ENCODE measurements at regions of chr1 and their contacts with region 1.

Region 1: GRCh38 chr1:206912445-206913095 is 9.2 kb downstream of the FCMR start:
- DNase-seq: peak; percentile 77
- H3K4me3 ChIP-seq: no peak overlapping the region
- H3K27ac ChIP-seq: no peak overlapping the region
- H3K4me1 ChIP-seq: peaks cover 3 to 34% (median 11%) of the 10 kb centered on the region in 4 donors
- H3K27me3 ChIP-seq: peaks cover 10% of the 10 kb centered on the region
- CTCF ChIP-seq: peak; percentile 86 to 88 (median 87)
- EP300 ChIP-seq: no peak
- POLR2A ChIP-seq: no peak

Region 2: GRCh38 chr1:206635080-206635977 is 277.2 kb before region 1 on chr1 and contains the start of gene DYRK3:
- in situ Hi-C with region 1: loop called in 3 of 4 experiments (anchors 10 to 25 kb)
- intact Hi-C with region 1: loop called (anchors 10 kb)
- DNase-seq: peak; percentile 96
- H3K4me3 ChIP-seq: peak within 1 kb of the TSS; percentile 48 to 89 (median 72)
- H3K27ac ChIP-seq: peak within 1 kb of the TSS; percentile 77 to 85 (median 82)
- H3K4me1 ChIP-seq: peaks cover 6 to 36% (median 18%) of the 10 kb centered on the region in 4 donors
- H3K27me3 ChIP-seq: peaks cover 21% of the 10 kb centered on the region
- CTCF ChIP-seq: peak in 3 of 5 experiments; percentile 7 to 37 (median 11)
- EP300 ChIP-seq: no peak
- POLR2A ChIP-seq: peak; percentile 79
- total RNA-seq, gene DYRK3: 1.6 to 3.2 TPM in 2 of 4 donors, not detected in the others

Region 3: DNA sequence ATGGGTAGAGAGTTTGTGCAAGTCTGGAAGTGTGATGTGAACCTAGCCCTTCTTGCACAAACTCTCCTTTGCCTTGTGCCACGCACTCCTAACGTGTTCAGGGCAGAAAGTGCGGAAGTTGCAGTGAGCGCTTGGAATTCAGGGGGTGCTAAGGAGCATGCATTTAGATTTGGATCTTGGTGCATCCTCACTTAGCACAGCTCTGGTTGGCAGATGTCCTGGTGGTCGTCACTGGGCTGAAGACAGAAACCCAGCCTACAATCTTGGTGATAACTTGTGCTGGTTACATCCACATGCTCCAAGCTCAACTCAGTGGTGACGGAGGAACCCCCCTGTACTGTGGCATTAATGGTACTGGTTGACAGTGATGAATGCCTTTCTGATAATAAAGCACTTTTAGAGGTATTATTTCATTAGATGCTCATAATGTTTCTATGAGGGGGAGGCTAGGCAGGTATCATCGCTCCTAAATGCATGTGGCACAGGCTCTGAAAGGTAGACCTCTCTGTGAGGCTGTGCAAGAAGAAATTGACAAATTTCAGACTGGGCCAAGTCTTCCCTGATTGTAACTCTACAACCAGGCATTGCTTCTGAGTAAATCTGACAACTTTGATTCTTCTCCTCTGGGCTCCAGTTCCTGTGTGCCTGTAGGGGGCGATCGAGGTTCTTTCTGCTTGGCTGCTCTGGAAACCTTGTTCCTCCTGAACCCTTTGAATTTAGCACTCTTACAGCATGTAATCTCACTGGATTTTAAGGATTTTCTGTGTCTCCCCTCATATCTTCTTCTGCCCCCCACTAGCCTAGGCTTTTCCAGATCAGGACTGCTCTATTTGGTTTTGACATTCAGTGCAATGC is 187.2 kb before region 1 on chr1:
- in situ Hi-C with region 1: loop called (anchors 5 to 25 kb)
- intact Hi-C with region 1: loop called (anchors 5 kb)
- DNase-seq: peak; percentile 60
- H3K4me3 ChIP-seq: no peak overlapping the region
- H3K27ac ChIP-seq: no peak overlapping the region
- H3K4me1 ChIP-seq: peaks cover 14 to 43% (median 25%) of the 10 kb centered on the region in 4 donors
- H3K27me3 ChIP-seq: no peaks in the 10 kb centered on the region
- CTCF ChIP-seq: peak; percentile 25 to 63 (median 40)
- EP300 ChIP-seq: no peak
- POLR2A ChIP-seq: no peak

Region 4: DNA sequence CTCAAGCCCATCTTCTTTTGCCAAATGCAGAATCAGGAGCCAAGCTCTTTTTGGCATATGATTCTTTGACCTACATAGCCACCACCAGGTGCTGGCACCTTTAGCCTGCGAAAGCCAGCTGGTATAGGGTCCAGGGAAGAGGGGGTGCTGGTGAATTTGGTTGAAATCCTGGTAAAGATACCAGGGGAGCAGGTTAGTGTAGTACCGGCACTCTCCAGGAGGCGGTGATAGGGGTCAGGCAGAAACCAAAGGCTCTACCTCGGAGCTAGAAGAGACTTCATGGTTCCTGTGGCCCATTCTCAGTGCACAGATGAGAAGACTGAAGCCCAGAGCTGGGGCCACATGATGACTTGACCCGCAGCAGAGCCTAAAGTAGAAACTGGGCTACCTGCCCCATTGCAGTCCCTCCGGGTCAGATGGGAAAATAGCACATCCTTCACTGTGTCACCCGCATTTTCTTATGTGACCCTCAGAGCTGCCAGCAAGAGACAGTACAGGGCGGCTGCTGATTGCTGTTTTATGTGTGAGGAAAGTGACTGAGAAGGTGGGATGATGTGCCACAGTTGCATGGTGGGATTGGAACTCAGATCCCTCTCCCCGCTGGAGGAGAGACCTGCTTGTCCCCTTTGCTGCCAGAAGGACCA is 177.9 kb before region 1 on chr1:
- in situ Hi-C with region 1: loop called (anchors 5 to 25 kb)
- intact Hi-C with region 1: loop called (anchors 5 kb)
- DNase-seq: peak; percentile 62
- H3K4me3 ChIP-seq: no peak overlapping the region
- H3K27ac ChIP-seq: no peak overlapping the region
- H3K4me1 ChIP-seq: peaks cover 0 to 23% (median 5%) of the 10 kb centered on the region in 4 donors
- H3K27me3 ChIP-seq: no peaks in the 10 kb centered on the region
- CTCF ChIP-seq: peak; percentile 66 to 80 (median 74)
- EP300 ChIP-seq: no peak
- POLR2A ChIP-seq: no peak

Region 5: GRCh38 chr1:206808615-206809014 is 104.0 kb before region 1 on chr1:
- in situ Hi-C with region 1: loop called in 1 of 4 experiments (anchors 10 kb)
- intact Hi-C with region 1: no loop called
- DNase-seq: peak; percentile 15
- H3K4me3 ChIP-seq: no peak overlapping the region
- H3K27ac ChIP-seq: no peak overlapping the region
- H3K4me1 ChIP-seq: peaks cover 0 to 2% (median 0%) of the 10 kb centered on the region in 4 donors
- H3K27me3 ChIP-seq: peaks cover 5% of the 10 kb centered on the region
- CTCF ChIP-seq: peak in 3 of 5 experiments; percentile 8 to 25 (median 14)
- EP300 ChIP-seq: no peak
- POLR2A ChIP-seq: no peak